Upper lobe of right lung (tissue), 1 donor: ENCODE measurements at regions of chr22 and their contacts with region 1.

Region 1: GRCh38 chr22:24503137-24503842 is 8.2 kb downstream of the UPB1 start:
- DNase-seq: no peak
- ATAC-seq: peak; percentile 84
- H3K4me3 ChIP-seq: no peak overlapping the region
- H3K27ac ChIP-seq: no peak overlapping the region
- H3K4me1 ChIP-seq: peaks cover 27% of the 10 kb centered on the region
- H3K27me3 ChIP-seq: no peaks in the 10 kb centered on the region
- CTCF ChIP-seq: peak; percentile 61

Region 2: DNA sequence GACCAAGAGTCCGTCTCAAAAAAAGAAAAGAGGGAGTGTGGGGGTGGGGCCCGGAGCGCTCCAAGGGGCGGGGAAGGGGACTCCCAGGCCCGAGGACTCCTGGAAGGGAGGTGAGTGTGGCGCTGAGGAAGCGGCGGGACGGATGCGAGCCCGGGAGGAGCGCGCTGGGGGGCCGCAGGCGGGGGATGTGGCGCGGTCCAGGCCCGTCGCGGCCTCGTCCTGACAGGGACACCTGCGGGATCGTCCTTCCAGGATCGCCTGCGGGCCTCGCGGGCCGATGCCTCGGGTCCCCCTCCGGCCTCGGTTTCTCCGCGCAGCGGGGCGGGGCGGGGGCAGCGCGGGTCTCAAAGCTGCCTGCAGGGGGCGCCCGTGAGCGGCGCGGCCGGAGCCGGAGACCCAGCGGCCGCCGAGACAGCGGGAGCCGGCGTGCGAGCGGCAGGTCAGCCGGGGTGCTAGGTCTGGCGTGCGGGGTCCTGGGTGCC is 79.7 kb before region 1 on chr22:
- intact Hi-C with region 1: loop called (anchors 5 kb)
- DNase-seq: peak; percentile 86
- ATAC-seq: peak; percentile 83
- H3K4me3 ChIP-seq: peak overlapping the region; percentile 68
- H3K27ac ChIP-seq: no peak overlapping the region
- H3K4me1 ChIP-seq: peaks cover 34% of the 10 kb centered on the region
- H3K27me3 ChIP-seq: no peaks in the 10 kb centered on the region
- CTCF ChIP-seq: peak; percentile 93

Region 3: DNA sequence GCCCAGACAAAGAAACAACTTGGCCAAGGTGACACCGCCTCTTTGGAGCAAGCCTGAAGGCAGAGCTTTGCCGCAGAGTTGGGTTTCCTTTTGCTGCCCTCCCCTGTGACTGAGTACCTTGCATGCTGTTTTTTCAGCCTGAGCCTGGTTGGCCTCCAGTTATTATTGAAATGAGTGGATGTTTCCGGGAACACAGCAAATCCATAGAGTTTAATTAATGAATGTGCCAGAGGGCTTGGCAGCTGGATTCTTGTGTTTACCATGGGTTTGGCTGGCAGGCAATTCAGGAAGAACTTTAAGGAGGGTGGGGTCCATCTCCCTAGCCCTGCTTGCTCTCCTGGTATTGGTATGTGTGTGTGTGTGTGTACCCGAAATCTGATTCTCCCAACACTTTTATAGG is 630.7 kb after region 1 on chr22:
- intact Hi-C with region 1: no loop called
- DNase-seq: no peak
- ATAC-seq: peak; percentile 77
- H3K4me3 ChIP-seq: no peak overlapping the region
- H3K27ac ChIP-seq: peak overlapping the region; percentile 80
- H3K4me1 ChIP-seq: peaks cover 42% of the 10 kb centered on the region
- H3K27me3 ChIP-seq: no peaks in the 10 kb centered on the region
- CTCF ChIP-seq: no peak